B cell (primary cell): ENCODE measurements at regions of chr6 and their contacts with region 1.

Region 1: GRCh38 chr6:139271056-139271455 is 20.7 kb downstream of the TXLNB start:
- DNase-seq: peak; percentile 77
- ATAC-seq: peak; percentile 96
- H3K4me3 ChIP-seq: peak overlapping the region in 4 of 5 experiments; percentile 12 to 69 (median 44)
- H3K4me3 Mint-ChIP-seq: peak overlapping the region; percentile 83
- H3K27ac ChIP-seq: peak overlapping the region; percentile 75 to 91
- H3K27ac Mint-ChIP-seq: peak overlapping the region; percentile 93
- H3K4me1 ChIP-seq: peaks cover 50 to 54% of the 10 kb centered on the region in 2 donors
- H3K4me1 Mint-ChIP-seq: peaks cover 69% of the 10 kb centered on the region
- H3K27me3 ChIP-seq: no peaks in the 10 kb centered on the region
- H3K27me3 Mint-ChIP-seq: no peaks in the 10 kb centered on the region
- CTCF ChIP-seq: no peak

Region 2: DNA sequence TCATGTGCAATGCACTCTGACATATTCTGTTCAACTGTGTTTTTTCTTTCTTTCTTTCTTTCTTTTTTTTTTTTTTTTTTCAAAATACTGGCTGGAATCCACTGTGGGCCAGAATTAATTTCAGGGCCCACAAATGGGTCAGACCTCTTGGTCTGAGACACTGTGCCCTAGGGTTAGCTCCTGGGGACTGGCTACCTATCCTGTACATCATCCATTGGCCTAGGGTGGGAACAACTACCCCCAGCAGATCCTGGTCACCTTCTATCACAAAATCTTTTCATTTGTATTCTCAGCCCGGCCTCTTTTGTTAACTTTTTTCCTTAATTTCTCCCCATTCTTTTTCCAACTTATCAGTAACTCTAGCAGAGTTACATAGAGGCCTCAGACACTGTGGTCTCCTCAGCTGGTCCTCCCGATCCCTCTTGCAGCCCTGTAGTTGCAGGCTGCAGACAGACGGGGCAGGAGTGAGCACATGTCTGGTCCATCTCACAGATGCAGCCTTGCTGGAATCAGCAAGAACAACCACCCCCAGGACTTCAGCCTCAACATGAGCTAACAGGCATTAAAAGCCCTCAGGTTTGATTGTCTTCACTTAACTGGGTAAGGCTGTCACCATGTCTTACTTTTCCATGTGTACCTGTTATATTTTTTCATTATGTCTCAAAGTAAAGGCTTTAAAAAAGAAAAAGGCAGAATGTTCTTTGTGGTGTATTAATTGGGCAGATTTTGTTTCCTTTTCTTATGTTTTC is 20.6 kb before region 1 on chr6:
- CTCF ChIA-PET with region 1: interaction called, 5 read pairs
- POLR2A ChIA-PET with region 1: interaction called, 4 read pairs
- intact Hi-C with region 1: loop called (anchors 2 kb)
- DNase-seq: peak; percentile 65
- ATAC-seq: peak; percentile 99
- H3K4me3 ChIP-seq: no peak overlapping the region
- H3K4me3 Mint-ChIP-seq: no peak overlapping the region
- H3K27ac ChIP-seq: no peak overlapping the region
- H3K27ac Mint-ChIP-seq: no peak overlapping the region
- H3K4me1 ChIP-seq: peaks cover 5 to 6% of the 10 kb centered on the region in 2 donors
- H3K4me1 Mint-ChIP-seq: peaks cover 13% of the 10 kb centered on the region
- H3K27me3 ChIP-seq: no peaks in the 10 kb centered on the region
- H3K27me3 Mint-ChIP-seq: no peaks in the 10 kb centered on the region
- CTCF ChIP-seq: peak; percentile 78

Region 3: GRCh38 chr6:139323511-139324300 is 52.6 kb after region 1 on chr6:
- CTCF ChIA-PET with region 1: interaction called, 6 read pairs
- POLR2A ChIA-PET with region 1: interaction called, 8 read pairs
- intact Hi-C with region 1: loop called (anchors 2 kb)
- DNase-seq: peak; percentile 88
- ATAC-seq: peak; percentile 74
- H3K4me3 ChIP-seq: peak overlapping the region; percentile 56 to 81 (median 67)
- H3K4me3 Mint-ChIP-seq: peak overlapping the region; percentile 92
- H3K27ac ChIP-seq: peak overlapping the region; percentile 83 to 92
- H3K27ac Mint-ChIP-seq: peak overlapping the region; percentile 98
- H3K4me1 ChIP-seq: peaks cover 30 to 42% of the 10 kb centered on the region in 2 donors
- H3K4me1 Mint-ChIP-seq: peaks cover 37% of the 10 kb centered on the region
- H3K27me3 ChIP-seq: no peaks in the 10 kb centered on the region
- H3K27me3 Mint-ChIP-seq: no peaks in the 10 kb centered on the region
- CTCF ChIP-seq: no peak